ENCODE measurements at regions of chr6 and their contacts with region 1.

Region 1: GRCh38 chr6:151723152-151723551 is 84.3 kb upstream of the ESR1 start:
- DNase-seq: peak; percentile 69
- H3K4me3 Mint-ChIP-seq: no peak overlapping the region
- H3K27ac Mint-ChIP-seq: peak overlapping the region; percentile 9
- H3K4me1 Mint-ChIP-seq: peaks cover 23% of the 10 kb centered on the region
- H3K27me3 Mint-ChIP-seq: peaks cover 3% of the 10 kb centered on the region

Region 2: GRCh38 chr6:150720774-150721233 is 1002.3 kb before region 1 on chr6:
- CTCF ChIA-PET with region 1: no interaction called
- POLR2A ChIA-PET with region 1: no interaction called
- intact Hi-C with region 1: no loop called
- DNase-seq: peak; percentile 12
- H3K4me3 Mint-ChIP-seq: no peak overlapping the region
- H3K27ac Mint-ChIP-seq: no peak overlapping the region
- H3K4me1 Mint-ChIP-seq: peaks cover 12% of the 10 kb centered on the region
- H3K27me3 Mint-ChIP-seq: peaks cover 10% of the 10 kb centered on the region

Region 3: GRCh38 chr6:151757506-151758245 is 34.5 kb after region 1 on chr6:
- CTCF ChIA-PET with region 1: no interaction called
- POLR2A ChIA-PET with region 1: no interaction called
- intact Hi-C with region 1: loop called (anchors 1 kb)
- DNase-seq: peak; percentile 55
- H3K4me3 Mint-ChIP-seq: peak overlapping the region; percentile 42
- H3K27ac Mint-ChIP-seq: peak overlapping the region; percentile 61
- H3K4me1 Mint-ChIP-seq: peaks cover 23% of the 10 kb centered on the region
- H3K27me3 Mint-ChIP-seq: no peaks in the 10 kb centered on the region

Measured in activated CD4-positive, alpha-beta memory T cell treated with anti-CD3 and anti-CD28 coated beads for 36 hours (primary cell).